Activated CD4-positive, alpha-beta memory T cell treated with anti-CD3 and anti-CD28 coated beads for 36 hours (primary cell): ENCODE measurements at regions of chr12 and their contacts with region 1.

Region 1: GRCh38 chr12:47882781-47883546 is 21.8 kb downstream of the VDR start:
- DNase-seq: peak; percentile 67
- H3K4me3 Mint-ChIP-seq: peak overlapping the region; percentile 89
- H3K27ac Mint-ChIP-seq: peak overlapping the region; percentile 97
- H3K4me1 Mint-ChIP-seq: peaks cover 88% of the 10 kb centered on the region
- H3K27me3 Mint-ChIP-seq: no peaks in the 10 kb centered on the region

Region 2: DNA sequence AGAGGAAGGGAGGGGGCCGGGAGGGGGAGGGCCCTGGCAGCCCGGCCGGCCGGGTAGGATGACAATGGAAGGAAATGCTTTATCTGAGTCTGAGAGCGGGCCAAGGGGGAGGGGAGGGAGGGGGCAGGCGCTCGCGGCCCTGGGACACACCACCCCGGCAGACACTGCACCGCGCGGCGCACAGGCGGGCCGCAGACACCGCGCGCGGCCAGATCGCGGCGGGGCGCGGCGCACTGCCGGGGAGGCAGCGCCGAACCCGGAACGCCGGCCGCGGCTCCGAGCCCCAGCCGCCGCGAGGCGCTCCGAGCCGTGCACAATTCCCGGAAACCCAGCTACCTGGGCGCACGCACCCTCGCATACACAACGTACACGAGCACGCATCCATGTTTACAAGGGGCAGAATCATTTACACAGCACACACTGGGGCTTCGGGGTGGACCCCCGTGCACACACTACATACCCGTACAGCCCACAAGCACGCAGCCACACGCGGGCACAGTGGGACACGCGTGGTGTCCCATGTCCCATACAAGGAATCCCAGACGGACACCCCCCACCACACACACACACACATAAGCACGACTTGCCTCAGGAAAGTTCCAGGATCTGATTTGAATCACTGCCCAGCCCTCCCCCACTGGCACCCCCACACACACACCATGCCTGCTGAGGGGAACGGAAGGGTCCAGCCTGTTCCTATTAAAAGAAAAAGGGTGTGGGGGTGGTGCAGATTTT is 62.9 kb before region 1 on chr12 and contains the start of gene HDAC7:
- CTCF ChIA-PET with region 1: interaction called, 4 read pairs
- POLR2A ChIA-PET with region 1: interaction called, 15 read pairs
- intact Hi-C with region 1: no loop called
- DNase-seq: peak; percentile 86
- H3K4me3 Mint-ChIP-seq: peak within 1 kb of the TSS; percentile 94
- H3K27ac Mint-ChIP-seq: peak within 1 kb of the TSS; percentile 99
- H3K4me1 Mint-ChIP-seq: peaks cover 68% of the 10 kb centered on the region
- H3K27me3 Mint-ChIP-seq: no peaks in the 10 kb centered on the region
- total RNA-seq, gene HDAC7: 257 to 280 TPM

Region 3: GRCh38 chr12:47844274-47845019 is 38.5 kb before region 1 on chr12:
- CTCF ChIA-PET with region 1: interaction called, 33 read pairs
- POLR2A ChIA-PET with region 1: interaction called, 7 read pairs
- intact Hi-C with region 1: loop called (anchors 5 kb)
- DNase-seq: no peak
- H3K4me3 Mint-ChIP-seq: no peak overlapping the region
- H3K27ac Mint-ChIP-seq: no peak overlapping the region
- H3K4me1 Mint-ChIP-seq: peaks cover 7% of the 10 kb centered on the region
- H3K27me3 Mint-ChIP-seq: no peaks in the 10 kb centered on the region

Region 4: GRCh38 chr12:47870175-47870781 is 12.7 kb before region 1 on chr12:
- CTCF ChIA-PET with region 1: interaction called, 18 read pairs
- POLR2A ChIA-PET with region 1: interaction called, 76 read pairs
- intact Hi-C with region 1: loop called (anchors 1 kb)
- DNase-seq: no peak
- H3K4me3 Mint-ChIP-seq: no peak overlapping the region
- H3K27ac Mint-ChIP-seq: peak overlapping the region; percentile 76
- H3K4me1 Mint-ChIP-seq: peaks cover 70% of the 10 kb centered on the region
- H3K27me3 Mint-ChIP-seq: no peaks in the 10 kb centered on the region

Region 5: GRCh38 chr12:47963340-47964040 is 80.5 kb after region 1 on chr12 and contains the start of gene TMEM106C:
- CTCF ChIA-PET with region 1: interaction called, 13 read pairs
- POLR2A ChIA-PET with region 1: interaction called, 5 read pairs
- intact Hi-C with region 1: loop called (anchors 1 kb)
- DNase-seq: peak; percentile 94
- H3K4me3 Mint-ChIP-seq: peak within 1 kb of the TSS; percentile 98
- H3K27ac Mint-ChIP-seq: peak within 1 kb of the TSS; percentile 81
- H3K4me1 Mint-ChIP-seq: peaks cover 34% of the 10 kb centered on the region
- H3K27me3 Mint-ChIP-seq: peaks cover 5% of the 10 kb centered on the region
- total RNA-seq, gene TMEM106C: 179 to 182 TPM